ENCODE measurements at regions of chr5 and their contacts with region 1.

Region 1: DNA sequence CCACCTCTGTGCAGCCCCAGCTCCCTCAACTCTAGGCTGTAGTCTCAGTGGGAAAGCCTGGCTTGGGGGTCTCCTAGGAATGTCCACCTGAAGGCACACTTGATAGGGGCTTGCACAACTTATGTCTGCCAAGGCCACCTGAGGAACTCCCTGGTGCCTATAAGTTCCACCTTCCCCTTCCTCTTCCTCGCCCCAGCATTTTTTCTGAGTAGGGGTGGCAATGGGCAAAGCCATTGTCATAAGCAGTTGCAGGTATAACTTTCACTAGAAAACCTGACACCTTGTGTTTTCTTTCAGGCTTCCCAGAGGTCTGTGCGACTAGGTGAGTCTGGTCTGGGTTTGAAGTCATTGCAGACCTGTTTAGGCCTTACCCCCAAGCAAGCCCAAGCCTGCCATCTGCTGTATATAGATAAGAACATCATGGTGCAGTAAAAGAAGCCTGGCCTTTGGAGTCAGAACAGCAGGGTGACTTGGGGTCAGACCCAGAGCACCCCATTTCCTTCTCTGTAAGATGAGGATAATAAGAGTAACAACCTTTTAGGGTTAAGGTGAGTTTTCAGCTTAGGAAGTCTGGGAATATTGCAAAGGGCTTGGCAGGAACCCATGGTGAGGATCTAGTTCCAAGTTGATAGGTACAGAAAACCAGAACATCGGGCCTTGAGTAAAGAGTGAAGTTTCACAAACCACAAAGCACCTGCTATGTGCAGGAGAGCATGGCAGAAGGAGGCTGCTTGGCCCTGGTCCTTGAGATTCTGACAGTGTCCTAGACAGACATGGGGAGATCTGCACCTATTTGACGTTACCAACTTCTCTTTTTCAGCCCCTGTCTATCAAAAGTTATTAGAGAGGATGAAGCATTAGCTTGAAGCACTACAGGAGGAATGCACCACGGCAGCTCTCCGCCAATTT is 33.8 kb downstream of the TGFBI start:
- DNase-seq: no peak
- ATAC-seq: no peak
- H3K4me3 ChIP-seq: no peak overlapping the region
- H3K27ac ChIP-seq: no peak overlapping the region
- H3K4me1 ChIP-seq: peaks cover 3 to 46% (median 25%) of the 10 kb centered on the region in 9 donors
- H3K27me3 ChIP-seq: no peaks in the 10 kb centered on the region
- CTCF ChIP-seq: peak; percentile 10 to 63 (median 50)

Region 2: GRCh38 chr5:135887351-135887864 is 175.2 kb before region 1 on chr5:
- intact Hi-C with region 1: loop called in 6 of 10 experiments (anchors 5 kb)
- DNase-seq: peak; percentile 27 to 37
- ATAC-seq: peak; percentile 69 to 89 (median 84)
- H3K4me3 ChIP-seq: no peak overlapping the region
- H3K27ac ChIP-seq: no peak overlapping the region
- H3K4me1 ChIP-seq: peaks cover 0 to 19% (median 4%) of the 10 kb centered on the region in 9 donors
- H3K27me3 ChIP-seq: peaks cover 0 to 47% (median 31%) of the 10 kb centered on the region in 7 donors
- CTCF ChIP-seq: peak; percentile 62 to 91 (median 88)

Region 3: GRCh38 chr5:135964670-135965320 is 97.8 kb before region 1 on chr5:
- intact Hi-C with region 1: loop called in 2 of 10 experiments (anchors 5 kb)
- DNase-seq: no peak
- ATAC-seq: peak in 6 of 8 donors; percentile 42 to 67 (median 54)
- H3K4me3 ChIP-seq: no peak overlapping the region
- H3K27ac ChIP-seq: no peak overlapping the region
- H3K4me1 ChIP-seq: peaks cover 0 to 9% (median 0%) of the 10 kb centered on the region in 9 donors
- H3K27me3 ChIP-seq: peaks cover 0 to 4% (median 0%) of the 10 kb centered on the region in 7 donors
- CTCF ChIP-seq: peak in 2 of 9 donors; percentile 41 to 43

Region 4: GRCh38 chr5:135999406-136000139 is 63.0 kb before region 1 on chr5:
- intact Hi-C with region 1: no loop called
- DNase-seq: no peak
- ATAC-seq: peak; percentile 16 to 66 (median 60)
- H3K4me3 ChIP-seq: no peak overlapping the region
- H3K27ac ChIP-seq: peak overlapping the region in 2 of 10 donors; percentile 22 to 78
- H3K4me1 ChIP-seq: peaks cover 0 to 50% (median 4%) of the 10 kb centered on the region in 9 donors
- H3K27me3 ChIP-seq: no peaks in the 10 kb centered on the region
- CTCF ChIP-seq: no peak

Region 5: DNA sequence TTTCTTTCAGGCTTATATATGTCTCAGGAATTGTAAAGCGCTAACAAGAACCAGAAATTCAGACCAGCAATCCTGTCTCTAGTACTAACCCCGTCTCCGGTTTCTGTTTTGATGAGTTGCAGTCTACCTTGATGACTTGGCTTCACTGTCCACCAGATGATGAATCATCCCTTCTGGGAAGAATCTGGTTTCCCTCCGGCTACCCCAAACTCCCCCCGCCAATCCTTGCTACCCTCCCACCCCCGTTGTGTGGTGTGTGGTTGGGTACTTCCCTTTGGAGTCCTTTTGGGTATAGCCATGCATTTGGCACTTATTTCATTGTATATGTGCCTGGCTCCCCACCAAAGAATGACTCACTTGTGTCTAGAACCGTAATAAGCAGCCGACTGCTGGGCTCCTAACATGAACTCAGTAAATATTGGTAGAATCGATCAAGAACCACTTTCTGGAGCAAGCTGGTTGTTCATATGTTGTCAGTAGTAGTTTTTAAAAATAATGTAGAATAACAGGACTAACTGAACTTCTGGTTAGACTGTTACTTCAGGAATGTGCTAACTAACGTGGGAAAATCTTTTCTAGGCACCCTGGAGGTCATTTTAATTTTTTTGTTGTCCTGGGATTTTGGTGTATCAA is 42.1 kb before region 1 on chr5:
- intact Hi-C with region 1: loop called in 1 of 10 experiments (anchors 5 kb)
- DNase-seq: no peak
- ATAC-seq: peak in 6 of 8 donors; percentile 7 to 51 (median 21)
- H3K4me3 ChIP-seq: no peak overlapping the region
- H3K27ac ChIP-seq: peak overlapping the region in 9 of 10 donors; percentile 10 to 88 (median 67)
- H3K4me1 ChIP-seq: peaks cover 5 to 90% (median 41%) of the 10 kb centered on the region in 9 donors
- H3K27me3 ChIP-seq: no peaks in the 10 kb centered on the region
- CTCF ChIP-seq: no peak

Region 6: GRCh38 chr5:136174021-136174659 is 111.5 kb after region 1 on chr5:
- intact Hi-C with region 1: loop called in 3 of 10 experiments (anchors 2 to 5 kb)
- DNase-seq: no peak
- ATAC-seq: peak in 5 of 8 donors; percentile 44 to 70 (median 64)
- H3K4me3 ChIP-seq: no peak overlapping the region
- H3K27ac ChIP-seq: no peak overlapping the region
- H3K4me1 ChIP-seq: peaks cover 0 to 18% (median 0%) of the 10 kb centered on the region in 9 donors
- H3K27me3 ChIP-seq: no peaks in the 10 kb centered on the region
- CTCF ChIP-seq: peak; percentile 50 to 80 (median 64)